Prostate gland (tissue), 2 donors: ENCODE measurements at regions of chr10 and their contacts with region 1.

Region 1: DNA sequence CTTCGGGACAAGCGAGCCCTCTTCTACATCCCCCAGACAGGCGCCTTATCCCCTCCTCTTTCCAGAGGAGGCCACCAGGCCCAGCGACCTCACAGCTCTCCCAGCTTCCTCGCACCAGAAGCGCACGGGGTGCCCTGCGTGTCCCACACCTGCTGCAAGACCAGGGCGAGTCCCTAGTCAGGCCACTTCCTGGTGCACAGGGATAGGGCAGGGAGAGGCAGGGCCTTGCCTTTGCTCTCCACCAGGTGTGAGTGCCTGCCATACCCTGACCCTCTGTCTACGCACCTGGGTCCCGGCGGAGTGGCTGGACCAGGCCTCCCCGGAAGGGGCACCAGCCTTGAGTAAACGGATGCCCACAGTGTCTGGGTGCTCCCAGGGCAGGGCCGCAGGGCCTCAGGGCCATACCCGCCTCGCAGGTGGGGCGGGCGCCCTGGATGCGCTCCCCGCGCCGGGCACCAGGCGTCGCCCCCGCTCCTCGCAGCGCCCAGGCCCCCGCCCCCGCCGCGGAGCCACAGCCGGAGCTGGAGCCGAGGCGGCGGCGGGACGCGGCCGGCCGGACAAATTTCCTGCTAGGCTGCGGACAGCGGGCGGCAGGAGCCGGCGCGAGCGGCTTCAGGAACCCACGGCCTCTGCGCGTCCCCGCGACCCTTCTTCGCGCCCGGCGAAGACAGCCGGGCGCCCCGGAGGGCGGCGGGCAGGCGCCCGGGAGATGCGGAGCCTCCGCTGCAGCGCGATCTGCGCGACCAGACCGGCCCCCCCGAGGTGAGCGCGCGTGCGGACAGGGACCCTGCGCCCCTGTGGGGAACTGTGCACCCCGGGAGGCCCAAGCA is at the start of gene PTPRE:
- DNase-seq: peak; percentile 48
- H3K4me3 ChIP-seq: peak within 1 kb of the TSS; percentile 41 to 54
- H3K27ac ChIP-seq: peak within 1 kb of the TSS; percentile 39 to 41
- H3K4me1 ChIP-seq: no peaks in the 10 kb centered on the region
- H3K27me3 ChIP-seq: no peaks in the 10 kb centered on the region
- CTCF ChIP-seq: peak; percentile 59 to 94 (median 76)
- POLR2A ChIP-seq: no peak
- total RNA-seq, gene PTPRE: 4.5 to 14.3 TPM

Region 2: GRCh38 chr10:128013626-128014025 is 106.9 kb after region 1 on chr10:
- intact Hi-C with region 1: loop called (anchors 2 kb)
- DNase-seq: no peak
- H3K4me3 ChIP-seq: no peak overlapping the region
- H3K27ac ChIP-seq: no peak overlapping the region
- H3K4me1 ChIP-seq: no peaks in the 10 kb centered on the region
- H3K27me3 ChIP-seq: no peaks in the 10 kb centered on the region
- CTCF ChIP-seq: no peak
- POLR2A ChIP-seq: no peak

Region 3: GRCh38 chr10:128069351-128070051 is 162.7 kb after region 1 on chr10:
- intact Hi-C with region 1: loop called (anchors 2 kb)
- DNase-seq: peak; percentile 50
- H3K4me3 ChIP-seq: no peak overlapping the region
- H3K27ac ChIP-seq: no peak overlapping the region
- H3K4me1 ChIP-seq: no peaks in the 10 kb centered on the region
- H3K27me3 ChIP-seq: no peaks in the 10 kb centered on the region
- CTCF ChIP-seq: peak; percentile 39 to 89 (median 86)
- POLR2A ChIP-seq: no peak

Region 4: DNA sequence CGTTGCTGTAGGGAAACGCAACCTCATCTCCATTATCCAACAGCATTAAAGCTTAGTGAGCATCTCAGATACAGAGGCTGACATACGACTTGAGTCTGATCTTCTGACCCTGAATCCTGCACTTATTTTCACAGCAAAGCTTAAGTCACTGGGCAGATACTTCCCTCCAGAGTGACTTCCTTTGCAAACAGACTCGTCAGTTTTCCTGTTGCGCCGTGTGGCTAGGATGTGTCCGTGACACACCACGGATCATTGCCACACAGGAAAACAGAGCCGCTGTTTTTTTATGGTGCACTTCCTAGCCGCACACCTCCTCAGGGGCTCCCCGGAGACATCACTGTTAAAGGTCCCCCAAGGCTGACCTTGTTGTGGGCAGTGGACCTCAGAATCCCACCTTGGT is 314.4 kb after region 1 on chr10:
- intact Hi-C with region 1: no loop called
- DNase-seq: no peak
- H3K4me3 ChIP-seq: no peak overlapping the region
- H3K27ac ChIP-seq: no peak overlapping the region
- H3K4me1 ChIP-seq: no peaks in the 10 kb centered on the region
- H3K27me3 ChIP-seq: no peaks in the 10 kb centered on the region
- CTCF ChIP-seq: no peak
- POLR2A ChIP-seq: no peak